ENCODE measurements at regions of chr4 and their contacts with region 1.

Region 1: GRCh38 chr4:75995727-75996126 is 5.0 kb upstream of the SDAD1 start:
- DNase-seq: peak; percentile 16
- H3K4me3 Mint-ChIP-seq: no peak overlapping the region
- H3K27ac Mint-ChIP-seq: no peak overlapping the region
- H3K4me1 Mint-ChIP-seq: peaks cover 6% of the 10 kb centered on the region
- H3K27me3 Mint-ChIP-seq: peaks cover 2% of the 10 kb centered on the region

Region 2: DNA sequence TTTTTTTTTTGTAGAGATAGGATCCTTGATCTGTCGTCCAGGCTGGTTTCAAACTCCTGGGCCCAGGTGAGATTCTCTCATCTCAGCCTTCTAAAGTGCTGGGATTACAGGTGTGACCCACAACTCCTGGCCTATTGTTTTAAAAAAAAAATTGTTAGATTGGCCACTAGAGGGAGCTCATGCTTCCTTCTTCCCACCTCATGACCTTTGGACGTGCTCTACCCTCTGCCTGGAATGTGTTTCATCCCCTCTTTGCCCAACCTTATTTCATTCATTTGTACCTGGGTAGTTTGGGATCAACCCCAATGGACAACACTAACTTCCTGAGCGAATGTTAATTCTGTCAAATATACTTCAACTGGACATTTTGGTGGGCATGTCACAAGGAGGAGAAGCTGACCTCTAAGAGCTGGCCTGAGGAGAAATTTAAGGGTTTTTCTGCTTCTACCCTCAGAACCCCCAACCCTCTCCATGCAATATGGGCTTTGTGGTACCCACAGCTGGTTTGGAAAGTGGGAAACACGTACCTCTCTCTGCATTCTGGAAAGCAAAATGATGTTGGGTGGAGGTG is 99.9 kb before region 1 on chr4:
- CTCF ChIA-PET with region 1: interaction called, 7 read pairs
- intact Hi-C with region 1: loop called (anchors 5 kb)
- DNase-seq: peak; percentile 18
- H3K4me3 Mint-ChIP-seq: no peak overlapping the region
- H3K27ac Mint-ChIP-seq: no peak overlapping the region
- H3K4me1 Mint-ChIP-seq: no peaks in the 10 kb centered on the region
- H3K27me3 Mint-ChIP-seq: no peaks in the 10 kb centered on the region

Region 3: GRCh38 chr4:76067652-76068286 is 72.0 kb after region 1 on chr4:
- CTCF ChIA-PET with region 1: interaction called, 117 read pairs
- intact Hi-C with region 1: loop called (anchors 1 kb)
- DNase-seq: peak; percentile 90
- H3K4me3 Mint-ChIP-seq: no peak overlapping the region
- H3K27ac Mint-ChIP-seq: no peak overlapping the region
- H3K4me1 Mint-ChIP-seq: no peaks in the 10 kb centered on the region
- H3K27me3 Mint-ChIP-seq: peaks cover 4% of the 10 kb centered on the region

Region 4: GRCh38 chr4:76305971-76306881 is 310.5 kb after region 1 on chr4 and contains the start of gene STBD1:
- CTCF ChIA-PET with region 1: no interaction called
- intact Hi-C with region 1: loop called (anchors 2 kb)
- DNase-seq: peak; percentile 19
- H3K4me3 Mint-ChIP-seq: peak within 1 kb of the TSS; percentile 72
- H3K27ac Mint-ChIP-seq: no peak within 1 kb of the TSS
- H3K4me1 Mint-ChIP-seq: peaks cover 17% of the 10 kb centered on the region
- H3K27me3 Mint-ChIP-seq: peaks cover 4% of the 10 kb centered on the region
- total RNA-seq, gene STBD1: not detected

Region 5: DNA sequence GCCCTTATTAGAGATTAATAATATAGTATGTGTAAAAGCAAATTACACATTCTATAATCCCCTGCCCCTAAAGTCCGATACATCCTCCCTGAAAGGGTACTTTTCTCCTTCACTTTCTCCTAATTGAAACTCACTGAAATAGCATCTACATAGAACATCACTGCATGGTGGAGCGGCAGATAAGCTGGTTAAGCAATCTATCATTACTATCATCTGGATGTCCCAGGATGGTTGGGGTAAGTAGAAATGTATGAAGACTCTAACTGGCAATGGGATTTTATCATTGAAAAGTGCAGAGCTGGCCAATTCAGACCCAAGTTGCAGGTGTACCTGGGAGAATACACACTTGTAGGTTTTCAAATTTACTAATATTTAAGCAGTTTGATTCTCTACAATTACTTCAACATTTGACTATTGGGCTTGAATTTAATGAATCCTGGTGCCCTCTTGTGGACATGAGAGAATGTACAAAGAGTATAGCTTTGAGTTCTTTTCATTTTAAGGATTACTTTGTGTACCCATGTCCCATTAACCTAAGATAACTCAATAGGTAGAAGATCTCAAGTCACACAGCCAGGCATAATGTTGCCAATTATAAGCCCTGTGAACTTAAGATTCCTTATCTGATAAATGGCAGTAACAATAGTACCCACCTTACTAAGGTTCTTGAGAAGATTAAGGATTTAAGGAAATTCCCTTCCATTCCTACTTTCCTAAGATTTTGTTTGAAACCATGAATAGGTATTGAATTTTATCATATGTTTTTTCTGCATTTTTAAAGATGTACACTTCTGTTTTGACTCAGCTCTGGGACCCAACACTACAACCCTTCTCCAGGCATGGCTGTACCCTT is 509.1 kb after region 1 on chr4:
- CTCF ChIA-PET with region 1: no interaction called
- intact Hi-C with region 1: loop called (anchors 10 kb)
- DNase-seq: no peak
- H3K4me3 Mint-ChIP-seq: no peak overlapping the region
- H3K27ac Mint-ChIP-seq: no peak overlapping the region
- H3K4me1 Mint-ChIP-seq: no peaks in the 10 kb centered on the region
- H3K27me3 Mint-ChIP-seq: peaks cover 13% of the 10 kb centered on the region